ENCODE measurements at regions of chr3 and their contacts with region 1.

Region 1: GRCh38 chr3:30751610-30752299 is 142.7 kb downstream of the GADL1 start:
- DNase-seq: peak; percentile 27 to 69 (median 68)
- ATAC-seq: peak in 1 of 2 donors; percentile 60
- H3K4me3 ChIP-seq: no peak overlapping the region
- H3K27ac ChIP-seq: no peak overlapping the region
- H3K4me1 ChIP-seq: no peaks in the 10 kb centered on the region
- H3K27me3 ChIP-seq: no peaks in the 10 kb centered on the region

Region 2: GRCh38 chr3:30042274-30042859 is 709.4 kb before region 1 on chr3:
- intact Hi-C with region 1: loop called (anchors 5 to 10 kb)
- DNase-seq: peak; percentile 41 to 64 (median 56)
- ATAC-seq: peak; percentile 66 to 72
- H3K4me3 ChIP-seq: no peak overlapping the region
- H3K27ac ChIP-seq: no peak overlapping the region
- H3K4me1 ChIP-seq: no peaks in the 10 kb centered on the region
- H3K27me3 ChIP-seq: no peaks in the 10 kb centered on the region

Region 3: GRCh38 chr3:30112902-30113484 is 638.8 kb before region 1 on chr3:
- intact Hi-C with region 1: loop called in 2 of 4 experiments (anchors 10 kb)
- DNase-seq: no peak
- ATAC-seq: peak; percentile 39 to 62
- H3K4me3 ChIP-seq: no peak overlapping the region
- H3K27ac ChIP-seq: no peak overlapping the region
- H3K4me1 ChIP-seq: no peaks in the 10 kb centered on the region
- H3K27me3 ChIP-seq: no peaks in the 10 kb centered on the region